ENCODE measurements at regions of chr17 and their contacts with region 1.

Region 1: GRCh38 chr17:39153599-39154051 is 2.2 kb upstream of the PLXDC1 start:
- DNase-seq: peak; percentile 71
- ATAC-seq: peak; percentile 73
- H3K4me3 ChIP-seq: peak overlapping the region; percentile 87
- H3K27ac ChIP-seq: peak overlapping the region; percentile 62
- H3K4me1 ChIP-seq: peaks cover 8% of the 10 kb centered on the region
- H3K27me3 ChIP-seq: peaks cover 5 to 13% of the 10 kb centered on the region in 2 experiments
- CTCF ChIP-seq: no peak
- EP300 ChIP-seq: no peak; a peak in 1 of 4 replicates
- POLR2A ChIP-seq: no peak
- RAD21 ChIP-seq: no peak

Region 2: DNA sequence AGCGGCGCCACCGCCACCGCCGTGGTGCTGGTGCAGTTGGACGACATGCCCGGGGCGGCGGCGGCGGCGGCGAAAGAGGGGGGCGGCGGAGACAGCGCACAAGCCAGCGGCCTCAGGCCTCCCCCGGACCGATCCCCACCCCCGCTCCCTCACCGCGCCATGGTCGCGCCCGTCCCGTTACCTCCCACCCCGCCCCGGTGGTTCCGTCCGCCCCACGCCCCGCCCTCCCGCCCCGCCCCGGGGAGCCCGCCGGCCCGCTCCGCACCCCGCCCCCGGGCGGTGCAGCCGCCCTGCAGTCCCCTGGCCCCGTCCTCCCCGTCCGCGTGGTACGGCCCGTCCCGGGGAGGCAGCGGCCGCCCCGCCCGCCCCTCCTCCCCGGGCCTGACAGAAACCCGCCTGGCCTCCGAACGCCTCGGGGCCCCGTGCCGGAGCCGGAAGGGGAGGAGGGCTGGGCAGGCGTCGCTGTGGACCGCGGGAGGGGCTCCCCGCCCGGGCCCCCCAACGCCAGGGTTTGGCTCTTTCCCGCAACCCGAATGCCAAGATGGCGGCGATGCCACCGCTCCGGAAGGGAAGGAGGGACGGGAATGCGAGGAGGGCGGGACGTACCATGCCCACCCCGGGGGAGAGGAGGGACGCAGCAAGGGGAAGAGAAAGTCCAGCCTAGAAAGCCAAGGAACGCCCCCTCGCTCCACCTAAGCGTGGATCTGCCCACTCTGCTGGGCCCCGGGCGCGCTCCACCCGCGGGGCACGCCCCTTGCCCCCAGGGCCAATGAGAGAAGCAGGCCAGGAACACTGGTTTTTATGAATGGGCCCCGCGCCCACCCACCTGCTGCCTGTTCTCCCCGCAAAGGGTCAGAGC is 354.0 kb before region 1 on chr17 and contains the start of gene PIP4K2B:
- CTCF ChIA-PET with region 1: no interaction called
- POLR2A ChIA-PET with region 1: no interaction called
- RAD21 ChIA-PET with region 1: no interaction called
- SMC1A ChIA-PET with region 1: no interaction called
- in situ Hi-C with region 1: no loop called
- intact Hi-C with region 1: loop called (anchors 5 kb)
- DNase-seq: peak; percentile 91
- ATAC-seq: peak; percentile 92
- H3K4me3 ChIP-seq: peak within 1 kb of the TSS; percentile 85
- H3K27ac ChIP-seq: peak within 1 kb of the TSS; percentile 93
- H3K4me1 ChIP-seq: peaks cover 11% of the 10 kb centered on the region
- H3K27me3 ChIP-seq: no peaks in the 10 kb centered on the region
- CTCF ChIP-seq: no peak
- EP300 ChIP-seq: no peak
- POLR2A ChIP-seq: peak; percentile 88
- RAD21 ChIP-seq: no peak
- polyA plus RNA-seq, gene PIP4K2B: 3.8 to 4.0 TPM

Region 3: GRCh38 chr17:38982858-38983746 is 170.5 kb before region 1 on chr17:
- CTCF ChIA-PET with region 1: interaction called, 208 read pairs
- POLR2A ChIA-PET with region 1: interaction called, 7 read pairs
- RAD21 ChIA-PET with region 1: interaction called, 142 read pairs
- SMC1A ChIA-PET with region 1: interaction called, 117 read pairs
- in situ Hi-C with region 1: loop called (anchors 5 kb)
- intact Hi-C with region 1: loop called (anchors 1 kb)
- DNase-seq: peak; percentile 19
- ATAC-seq: peak; percentile 73
- H3K4me3 ChIP-seq: no peak overlapping the region
- H3K27ac ChIP-seq: no peak overlapping the region
- H3K4me1 ChIP-seq: no peaks in the 10 kb centered on the region
- H3K27me3 ChIP-seq: no peaks in the 10 kb centered on the region
- CTCF ChIP-seq: peak; percentile 70 to 79 (median 77)
- EP300 ChIP-seq: no peak
- POLR2A ChIP-seq: no peak
- RAD21 ChIP-seq: peak; percentile 92

Region 4: GRCh38 chr17:39077866-39078265 is 75.8 kb before region 1 on chr17:
- CTCF ChIA-PET with region 1: interaction called, 16 read pairs
- POLR2A ChIA-PET with region 1: no interaction called
- RAD21 ChIA-PET with region 1: interaction called, 10 read pairs
- SMC1A ChIA-PET with region 1: interaction called, 12 read pairs
- in situ Hi-C with region 1: loop called (anchors 5 kb)
- intact Hi-C with region 1: no loop called
- DNase-seq: no peak
- ATAC-seq: peak; percentile 19; the same call in 2 of the 3 replicates
- H3K4me3 ChIP-seq: no peak overlapping the region
- H3K27ac ChIP-seq: no peak overlapping the region
- H3K4me1 ChIP-seq: no peaks in the 10 kb centered on the region
- H3K27me3 ChIP-seq: no peaks in the 10 kb centered on the region; a peak in 2 of 4 replicates
- CTCF ChIP-seq: no peak; a peak in 1 of 6 replicates
- EP300 ChIP-seq: no peak
- POLR2A ChIP-seq: no peak
- RAD21 ChIP-seq: no peak

Region 5: DNA sequence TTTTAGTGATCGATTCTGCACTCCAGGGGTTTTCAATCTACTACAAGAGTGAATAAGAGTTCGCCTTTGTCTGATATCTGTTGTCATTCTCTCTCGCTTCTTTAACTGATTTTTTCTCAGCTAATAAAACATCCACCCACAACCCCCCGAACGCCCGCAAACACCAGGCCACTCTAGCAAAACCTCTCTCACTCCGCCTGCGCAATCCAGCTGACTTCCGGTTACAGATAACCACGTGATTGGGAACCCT is 46.1 kb after region 1 on chr17:
- CTCF ChIA-PET with region 1: interaction called, 16 read pairs
- POLR2A ChIA-PET with region 1: interaction called, 6 read pairs
- RAD21 ChIA-PET with region 1: interaction called, 18 read pairs
- SMC1A ChIA-PET with region 1: interaction called, 4 read pairs
- in situ Hi-C with region 1: no loop called
- intact Hi-C with region 1: no loop called
- DNase-seq: peak; percentile 81
- ATAC-seq: peak; percentile 65
- H3K4me3 ChIP-seq: peak overlapping the region; percentile 95
- H3K27ac ChIP-seq: peak overlapping the region; percentile 100
- H3K4me1 ChIP-seq: peaks cover 27% of the 10 kb centered on the region
- H3K27me3 ChIP-seq: no peaks in the 10 kb centered on the region
- CTCF ChIP-seq: no peak
- EP300 ChIP-seq: no peak
- POLR2A ChIP-seq: no peak
- RAD21 ChIP-seq: no peak

Region 6: GRCh38 chr17:39261286-39261685 is 107.7 kb after region 1 on chr17:
- CTCF ChIA-PET with region 1: no interaction called
- POLR2A ChIA-PET with region 1: no interaction called
- RAD21 ChIA-PET with region 1: no interaction called
- SMC1A ChIA-PET with region 1: no interaction called
- in situ Hi-C with region 1: no loop called
- intact Hi-C with region 1: no loop called
- DNase-seq: no peak
- ATAC-seq: peak; percentile 56
- H3K4me3 ChIP-seq: no peak overlapping the region
- H3K27ac ChIP-seq: no peak overlapping the region
- H3K4me1 ChIP-seq: no peaks in the 10 kb centered on the region
- H3K27me3 ChIP-seq: no peaks in the 10 kb centered on the region
- CTCF ChIP-seq: peak; percentile 6 to 54 (median 47); a peak in 4 of 6 replicates
- EP300 ChIP-seq: no peak
- POLR2A ChIP-seq: no peak
- RAD21 ChIP-seq: no peak

Measured in GM12878 (cell line).